ENCODE measurements at regions of chr9 and their contacts with region 1.

Region 1: DNA sequence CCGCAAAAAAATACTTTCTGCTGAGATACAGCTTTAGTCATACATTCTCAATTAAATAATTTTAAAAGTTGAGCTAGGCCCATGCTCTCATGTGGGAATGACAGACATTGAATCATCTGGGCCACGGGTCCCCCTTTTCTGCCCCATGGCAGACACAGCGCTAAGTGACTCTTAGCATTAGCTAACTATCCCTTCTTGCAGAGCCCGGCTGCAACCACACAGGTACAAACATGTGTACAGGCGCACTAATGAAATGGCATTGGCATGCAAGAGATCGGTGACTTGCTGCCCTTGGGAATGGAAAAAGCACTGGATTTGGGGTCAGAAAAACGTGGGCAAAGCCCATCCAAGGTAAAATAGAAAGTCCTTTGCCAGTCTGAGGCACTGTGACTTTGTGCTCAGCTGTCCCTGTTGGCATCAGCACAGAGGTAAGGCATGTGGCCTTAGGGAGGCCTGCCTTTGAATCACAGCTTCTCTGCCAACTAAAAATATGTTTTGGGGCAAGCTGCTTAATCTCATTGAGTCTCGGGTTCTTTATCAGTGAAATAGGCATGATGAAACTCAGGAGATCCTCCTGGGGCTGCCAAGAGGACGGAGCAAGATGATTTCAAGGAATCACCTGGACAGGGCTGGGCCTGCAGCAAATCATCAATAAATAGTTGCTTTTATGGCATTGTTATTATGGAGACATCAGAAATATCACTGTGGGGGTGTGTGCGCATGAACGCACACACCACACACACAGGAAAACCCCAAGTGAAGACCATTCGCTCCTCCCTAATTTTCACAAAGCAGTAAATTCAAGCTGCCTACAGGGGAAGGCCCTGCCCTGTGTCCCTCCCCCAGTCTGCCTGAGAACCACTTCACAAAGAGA is 54.2 kb downstream of the WHRN start:
- DNase-seq: no peak
- ATAC-seq: peak; percentile 38
- H3K4me3 Mint-ChIP-seq: no peak overlapping the region
- H3K27ac Mint-ChIP-seq: peak overlapping the region; percentile 40
- H3K4me1 Mint-ChIP-seq: peaks cover 24% of the 10 kb centered on the region
- H3K27me3 Mint-ChIP-seq: no peaks in the 10 kb centered on the region

Region 2: GRCh38 chr9:114434878-114435311 is 16.2 kb before region 1 on chr9:
- CTCF ChIA-PET with region 1: interaction called, 10 read pairs
- POLR2A ChIA-PET with region 1: no interaction called
- intact Hi-C with region 1: no loop called
- DNase-seq: peak; percentile 32
- ATAC-seq: no peak
- H3K4me3 Mint-ChIP-seq: no peak overlapping the region
- H3K27ac Mint-ChIP-seq: no peak overlapping the region
- H3K4me1 Mint-ChIP-seq: peaks cover 2% of the 10 kb centered on the region
- H3K27me3 Mint-ChIP-seq: no peaks in the 10 kb centered on the region